PC-9 (cell line): ENCODE measurements at regions of chr4 and their contacts with region 1.

Region 1: GRCh38 chr4:1043658-1044468 is 32.4 kb downstream of the FGFRL1 start:
- DNase-seq: peak; percentile 95 to 96
- H3K4me3 ChIP-seq: peak overlapping the region; percentile 17; the same call in 1 of the 2 replicates
- H3K27ac ChIP-seq: peak overlapping the region; percentile 45
- H3K4me1 ChIP-seq: peaks cover 49% of the 10 kb centered on the region
- H3K27me3 ChIP-seq: 0 out of 2 replicates have a peak, but pooled peaks cover 4% of the 10 kb centered on the region
- CTCF ChIP-seq: no peak

Region 2: GRCh38 chr4:1011022-1011694 is 32.7 kb before region 1 on chr4 and contains the start of gene FGFRL1:
- CTCF ChIA-PET with region 1: no interaction called
- POLR2A ChIA-PET with region 1: interaction called, 12 read pairs
- intact Hi-C with region 1: no loop called
- DNase-seq: peak; percentile 73 to 92
- H3K4me3 ChIP-seq: peak within 1 kb of the TSS; percentile 90
- H3K27ac ChIP-seq: peak within 1 kb of the TSS; percentile 55
- H3K4me1 ChIP-seq: peaks cover 5% of the 10 kb centered on the region; the same call in 1 of the 2 replicates
- H3K27me3 ChIP-seq: peaks cover 11% of the 10 kb centered on the region; the same call in 1 of the 2 replicates
- CTCF ChIP-seq: no peak
- total RNA-seq, gene FGFRL1: 59.5 and 61.6 TPM in 2 replicates

Region 3: GRCh38 chr4:1082215-1083182 is 38.6 kb after region 1 on chr4:
- CTCF ChIA-PET with region 1: no interaction called
- POLR2A ChIA-PET with region 1: no interaction called
- intact Hi-C with region 1: loop called (anchors 5 kb)
- DNase-seq: peak; percentile 87 to 92
- H3K4me3 ChIP-seq: no peak overlapping the region
- H3K27ac ChIP-seq: peak overlapping the region; percentile 45
- H3K4me1 ChIP-seq: peaks cover 26% of the 10 kb centered on the region
- H3K27me3 ChIP-seq: no peaks in the 10 kb centered on the region
- CTCF ChIP-seq: no peak

Region 4: GRCh38 chr4:1130316-1131186 is 86.7 kb after region 1 on chr4:
- CTCF ChIA-PET with region 1: no interaction called
- POLR2A ChIA-PET with region 1: no interaction called
- intact Hi-C with region 1: loop called (anchors 5 kb)
- DNase-seq: peak; percentile 60 to 63
- H3K4me3 ChIP-seq: no peak overlapping the region
- H3K27ac ChIP-seq: no peak overlapping the region
- H3K4me1 ChIP-seq: no peaks in the 10 kb centered on the region
- H3K27me3 ChIP-seq: peaks cover 22% of the 10 kb centered on the region; the same call in 1 of the 2 replicates
- CTCF ChIP-seq: peak; percentile 99

Region 5: GRCh38 chr4:1249148-1249730 is 205.4 kb after region 1 on chr4:
- CTCF ChIA-PET with region 1: no interaction called
- POLR2A ChIA-PET with region 1: no interaction called
- intact Hi-C with region 1: loop called (anchors 5 kb)
- DNase-seq: peak; percentile 48 to 81
- H3K4me3 ChIP-seq: peak overlapping the region; percentile 83
- H3K27ac ChIP-seq: peak overlapping the region; percentile 56
- H3K4me1 ChIP-seq: peaks cover 24% of the 10 kb centered on the region
- H3K27me3 ChIP-seq: no peaks in the 10 kb centered on the region
- CTCF ChIP-seq: no peak

Region 6: DNA sequence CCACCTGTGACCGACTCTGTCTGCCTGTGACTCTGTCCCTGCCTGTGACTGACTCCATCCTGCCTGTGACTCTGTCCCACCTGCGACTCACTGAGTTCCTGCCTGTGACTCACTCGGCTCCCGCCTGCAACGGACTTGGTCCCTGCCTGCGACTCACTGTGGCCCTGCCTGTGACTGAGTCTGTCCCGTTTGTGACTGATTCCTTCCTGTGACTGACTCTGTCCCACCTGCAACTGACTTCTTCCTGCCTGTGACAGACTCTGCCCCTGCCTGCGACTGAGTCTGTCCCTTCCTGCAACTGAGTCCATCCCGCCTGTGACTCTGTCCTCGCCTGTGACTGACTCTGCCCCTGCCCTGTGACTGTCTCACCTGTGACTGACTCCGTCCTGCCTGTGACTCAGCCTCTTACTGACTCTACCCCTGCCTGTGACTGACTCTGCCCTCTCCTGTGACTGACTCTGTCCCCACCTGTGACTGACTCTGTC is 293.6 kb after region 1 on chr4:
- CTCF ChIA-PET with region 1: no interaction called
- POLR2A ChIA-PET with region 1: no interaction called
- intact Hi-C with region 1: loop called (anchors 10 kb)
- DNase-seq: peak; percentile 68 to 81
- H3K4me3 ChIP-seq: no peak overlapping the region
- H3K27ac ChIP-seq: peak overlapping the region; percentile 63
- H3K4me1 ChIP-seq: peaks cover 15% of the 10 kb centered on the region
- H3K27me3 ChIP-seq: no peaks in the 10 kb centered on the region
- CTCF ChIP-seq: no peak

Region 7: DNA sequence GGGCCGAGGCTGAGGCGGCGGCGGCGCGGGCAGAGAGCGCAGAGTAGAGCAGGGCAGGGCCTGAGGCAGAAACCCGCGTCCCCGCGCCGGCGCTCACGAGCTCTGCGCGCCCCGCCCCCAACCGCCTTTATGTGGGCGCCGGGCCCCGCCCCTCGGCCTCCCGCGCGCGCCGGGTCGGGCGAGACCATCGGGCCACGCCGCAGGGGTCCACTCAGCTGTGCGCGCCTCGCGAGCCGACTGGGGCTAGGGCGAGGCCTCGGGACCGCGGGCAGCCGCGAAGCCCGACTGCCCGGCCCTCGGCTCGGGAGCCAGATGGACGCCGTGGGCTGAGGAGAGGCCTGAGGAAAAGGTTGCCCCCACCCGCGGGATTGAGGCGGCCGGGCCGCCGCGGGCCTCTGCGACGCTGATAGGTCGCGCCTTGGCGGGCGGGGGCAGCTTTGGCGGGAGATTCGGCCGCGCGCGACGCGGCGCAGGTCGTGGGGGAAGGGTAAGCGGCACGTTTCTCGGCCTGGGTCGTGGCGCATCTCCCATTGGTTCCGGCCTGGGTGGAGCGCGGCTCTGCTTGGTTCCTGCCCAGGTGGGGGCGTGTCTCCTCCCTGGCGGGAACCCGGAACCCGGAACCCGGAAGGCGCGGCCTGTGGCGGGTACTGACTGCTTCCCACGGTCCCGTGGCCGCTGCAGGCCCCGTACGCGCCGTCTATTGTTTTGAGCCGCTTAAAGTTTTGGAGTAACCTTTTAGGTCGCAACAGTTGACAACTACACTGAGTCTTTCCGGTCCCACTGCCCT is 668.5 kb after region 1 on chr4 and contains the start of gene SLBP:
- CTCF ChIA-PET with region 1: no interaction called
- POLR2A ChIA-PET with region 1: interaction called, 29 read pairs
- intact Hi-C with region 1: no loop called
- DNase-seq: peak; percentile 90 to 98
- H3K4me3 ChIP-seq: peak within 1 kb of the TSS; percentile 71
- H3K27ac ChIP-seq: peak within 1 kb of the TSS; percentile 96
- H3K4me1 ChIP-seq: peaks cover 20% of the 10 kb centered on the region
- H3K27me3 ChIP-seq: no peaks in the 10 kb centered on the region
- CTCF ChIP-seq: no peak
- total RNA-seq, gene SLBP: 61.7 and 63.4 TPM in 2 replicates